Posterior vena cava (tissue), 2 donors: ENCODE measurements at regions of chr18 and their contacts with region 1.

Region 1: GRCh38 chr18:55054021-55054990 is 95.0 kb upstream of the CCDC68 start:
- DNase-seq: no peak

Region 2: DNA sequence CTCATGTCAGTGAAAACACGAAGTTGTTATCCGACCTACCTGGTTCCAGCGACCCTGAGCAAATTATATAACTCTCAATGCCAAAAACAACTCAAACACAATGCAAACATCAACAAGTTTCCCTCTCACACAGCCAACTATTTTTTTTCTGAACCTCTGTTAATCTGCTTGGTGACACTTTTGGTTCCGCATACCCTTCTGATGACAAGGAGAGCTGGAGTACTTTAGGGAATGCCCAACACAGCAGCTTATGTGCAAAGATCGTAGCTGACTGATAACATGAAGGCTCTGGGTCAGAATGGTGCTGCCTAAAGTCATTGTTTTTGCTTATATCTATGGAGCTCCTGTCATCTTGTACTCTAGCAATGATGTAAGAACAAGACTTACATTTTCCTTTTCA is 22.3 kb before region 1 on chr18:
- intact Hi-C with region 1: loop called in 1 of 2 experiments (anchors 1 kb)
- DNase-seq: no peak

Region 3: GRCh38 chr18:55069497-55069896 is 15.2 kb after region 1 on chr18:
- intact Hi-C with region 1: no loop called
- DNase-seq: no peak

Region 4: DNA sequence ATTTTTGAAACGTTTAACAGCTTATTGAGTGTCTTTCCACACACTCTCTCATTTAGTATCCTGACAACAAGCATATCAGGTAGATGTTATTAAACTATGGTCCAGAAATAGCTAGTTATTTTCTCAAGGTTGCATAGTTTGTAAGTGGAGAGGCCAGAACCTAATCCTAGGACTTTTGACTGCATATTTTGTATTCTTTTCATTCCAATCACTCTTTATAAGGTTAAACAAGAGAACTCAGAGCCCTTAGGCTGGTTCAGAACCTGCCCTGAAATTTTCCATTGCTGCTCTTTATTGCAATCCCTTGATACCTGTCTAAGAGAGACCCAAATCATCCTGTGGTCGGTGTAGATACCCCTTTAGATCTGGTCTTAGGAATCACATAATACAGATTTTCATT is 906.3 kb after region 1 on chr18:
- intact Hi-C with region 1: no loop called
- DNase-seq: no peak